ENCODE measurements at regions of chr6 and their contacts with region 1.

Region 1: GRCh38 chr6:57316581-57317059 is 810 bp upstream of the PRIM2 start:
- DNase-seq: peak; percentile 91
- H3K4me3 Mint-ChIP-seq: peak overlapping the region; percentile 99
- H3K27ac Mint-ChIP-seq: peak overlapping the region; percentile 99
- H3K4me1 Mint-ChIP-seq: peaks cover 30% of the 10 kb centered on the region
- H3K27me3 Mint-ChIP-seq: no peaks in the 10 kb centered on the region

Region 2: GRCh38 chr6:56708810-56709597 is 607.6 kb before region 1 on chr6:
- CTCF ChIA-PET with region 1: no interaction called
- intact Hi-C with region 1: loop called (anchors 2 kb)
- DNase-seq: no peak
- H3K4me3 Mint-ChIP-seq: no peak overlapping the region
- H3K27ac Mint-ChIP-seq: no peak overlapping the region
- H3K4me1 Mint-ChIP-seq: no peaks in the 10 kb centered on the region
- H3K27me3 Mint-ChIP-seq: peaks cover 5% of the 10 kb centered on the region

Region 3: GRCh38 chr6:56955171-56956045 is 361.2 kb before region 1 on chr6:
- CTCF ChIA-PET with region 1: interaction called, 12 read pairs
- intact Hi-C with region 1: loop called (anchors 1 kb)
- DNase-seq: peak; percentile 85
- H3K4me3 Mint-ChIP-seq: peak overlapping the region; percentile 74
- H3K27ac Mint-ChIP-seq: no peak overlapping the region
- H3K4me1 Mint-ChIP-seq: peaks cover 8% of the 10 kb centered on the region
- H3K27me3 Mint-ChIP-seq: peaks cover 60% of the 10 kb centered on the region

Region 4: DNA sequence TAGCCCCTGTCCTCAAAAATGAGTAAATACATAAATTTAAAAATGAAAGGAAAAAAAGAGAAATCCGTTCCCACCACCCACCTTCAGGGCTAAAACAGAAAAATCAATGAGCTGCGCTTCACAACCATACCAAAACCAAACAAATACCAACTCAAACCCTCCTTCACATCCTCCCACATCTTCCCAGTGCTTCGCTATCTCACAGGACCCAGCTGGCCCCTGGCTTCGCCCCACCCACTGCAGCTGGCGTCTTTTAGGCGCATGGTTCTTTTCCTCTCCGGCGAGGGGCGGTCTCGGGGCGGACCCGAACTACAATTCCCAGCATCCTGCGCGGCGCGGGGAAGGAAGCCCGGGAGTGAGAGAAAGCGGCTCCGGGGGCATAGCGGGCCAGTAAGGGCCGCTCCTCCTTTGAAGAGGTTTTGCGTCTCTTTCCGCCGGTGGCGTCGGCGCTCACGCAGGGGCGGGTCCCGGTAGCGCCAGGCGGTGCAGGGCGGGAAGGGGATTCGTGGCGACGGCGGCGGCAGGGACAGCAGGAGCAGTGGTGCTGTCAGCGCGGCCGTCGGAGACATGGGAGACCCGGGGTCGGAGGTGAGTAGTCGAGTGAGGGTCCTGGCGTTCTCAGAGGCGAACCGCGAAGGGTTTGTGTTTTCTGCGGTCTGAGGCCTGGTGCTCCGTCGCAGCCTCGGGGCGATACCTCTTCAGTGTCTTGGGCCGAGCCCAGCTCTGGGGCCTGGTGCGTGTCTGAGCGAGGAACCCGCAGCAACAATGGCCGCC is 226.7 kb before region 1 on chr6 and contains the start of gene ZNF451:
- CTCF ChIA-PET with region 1: interaction called, 3 read pairs
- intact Hi-C with region 1: loop called (anchors 1 kb)
- DNase-seq: peak; percentile 98
- H3K4me3 Mint-ChIP-seq: peak within 1 kb of the TSS; percentile 88
- H3K27ac Mint-ChIP-seq: peak within 1 kb of the TSS; percentile 89
- H3K4me1 Mint-ChIP-seq: peaks cover 32% of the 10 kb centered on the region
- H3K27me3 Mint-ChIP-seq: no peaks in the 10 kb centered on the region
- total RNA-seq, gene ZNF451: 43.8 to 46.2 TPM

Region 5: DNA sequence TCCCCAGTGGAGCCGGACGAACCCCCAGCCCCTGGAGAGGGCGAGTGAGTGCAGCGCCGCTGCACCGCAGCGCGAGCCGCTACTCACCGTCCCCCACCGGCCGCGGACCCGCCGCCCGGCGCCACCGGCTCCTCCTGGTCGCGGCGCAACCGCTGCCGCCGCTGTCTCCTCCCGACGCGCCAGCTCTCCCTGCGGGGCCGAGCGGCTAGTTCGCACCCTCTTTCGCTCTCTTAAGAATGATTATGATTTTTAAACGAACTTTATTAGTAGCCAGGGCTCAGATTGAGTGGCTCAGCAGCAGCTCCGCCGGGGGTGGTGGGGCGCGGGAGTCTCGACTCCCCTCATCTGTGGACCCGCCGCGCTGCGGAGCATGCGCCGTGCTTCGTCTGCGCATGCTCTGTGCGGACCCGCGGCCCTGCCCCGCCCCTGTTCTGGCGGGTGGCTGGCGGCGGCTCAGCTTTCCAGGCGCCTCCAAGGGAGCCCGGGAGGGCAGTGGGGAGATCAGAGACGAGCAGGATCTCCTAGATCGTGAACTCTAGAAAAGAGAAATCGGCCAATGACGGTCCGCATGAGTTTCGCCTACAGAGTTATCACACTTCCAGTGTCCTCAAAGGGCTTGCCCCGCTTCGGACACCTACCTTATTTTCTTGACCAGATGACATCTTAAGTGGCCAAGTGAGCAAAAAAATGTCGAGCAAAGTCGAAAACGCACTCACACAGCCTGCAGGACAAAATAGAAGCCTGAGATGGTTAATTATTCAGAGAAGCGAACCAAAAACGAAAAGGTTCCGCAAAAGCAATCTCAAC is 94.5 kb before region 1 on chr6 and contains the start of gene RAB23:
- CTCF ChIA-PET with region 1: interaction called, 3 read pairs
- intact Hi-C with region 1: loop called (anchors 1 kb)
- DNase-seq: peak; percentile 74
- H3K4me3 Mint-ChIP-seq: peak within 1 kb of the TSS; percentile 99
- H3K27ac Mint-ChIP-seq: peak within 1 kb of the TSS; percentile 93
- H3K4me1 Mint-ChIP-seq: peaks cover 14% of the 10 kb centered on the region
- H3K27me3 Mint-ChIP-seq: peaks cover 18% of the 10 kb centered on the region
- total RNA-seq, gene RAB23: 1.1 to 1.7 TPM